GM12878 (cell line): ENCODE measurements at regions of chr11 and their contacts with region 1.

Region 1: DNA sequence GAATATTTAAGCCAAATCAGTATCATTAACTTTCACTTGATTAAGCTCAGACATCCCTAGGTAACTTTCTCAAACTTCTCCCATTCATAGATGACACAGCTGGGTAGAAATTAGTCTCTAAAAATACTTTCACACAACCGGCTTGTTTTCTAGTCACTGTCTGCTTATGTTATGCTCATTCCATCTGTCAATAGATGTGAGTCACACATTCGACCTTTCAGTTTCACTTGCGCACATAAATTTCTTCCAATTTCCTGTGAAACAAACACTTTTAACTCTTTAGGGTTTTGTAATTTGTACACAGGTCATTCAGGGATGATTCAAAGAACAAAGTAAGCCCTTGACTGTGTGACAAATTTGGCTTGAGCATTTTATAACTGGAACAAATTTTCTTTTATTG is 723.0 kb downstream of the KCNA4 start:
- DNase-seq: peak; percentile 45
- ATAC-seq: peak; percentile 96
- H3K4me3 ChIP-seq: no peak overlapping the region
- H3K27ac ChIP-seq: no peak overlapping the region
- H3K4me1 ChIP-seq: no peaks in the 10 kb centered on the region
- H3K27me3 ChIP-seq: no peaks in the 10 kb centered on the region
- CTCF ChIP-seq: no peak
- EP300 ChIP-seq: peak; percentile 98 to 99
- POLR2A ChIP-seq: no peak
- RAD21 ChIP-seq: no peak

Region 2: DNA sequence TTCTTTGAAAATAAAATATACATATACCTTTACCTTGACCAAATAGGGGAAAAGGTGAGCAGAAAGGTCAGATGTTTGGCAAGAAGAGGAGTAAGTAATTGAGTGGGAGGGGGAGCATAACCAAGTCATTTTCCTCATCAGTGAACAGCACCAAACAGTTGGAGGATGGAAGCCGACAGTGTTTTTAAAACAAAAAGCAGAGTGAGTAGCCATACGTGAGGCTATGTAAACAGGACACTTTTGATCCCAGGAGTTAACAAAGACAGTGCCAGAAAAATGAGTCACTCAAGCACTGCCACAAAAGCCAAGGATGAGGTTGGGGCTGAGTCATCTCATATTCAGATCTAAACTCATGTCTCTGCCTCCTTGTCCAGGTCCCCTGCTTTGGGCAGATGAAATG is 11.7 kb before region 1 on chr11:
- CTCF ChIA-PET with region 1: interaction called, 41 read pairs
- POLR2A ChIA-PET with region 1: interaction called, 6 read pairs
- RAD21 ChIA-PET with region 1: interaction called, 57 read pairs
- SMC1A ChIA-PET with region 1: interaction called, 71 read pairs
- in situ Hi-C with region 1: no loop called
- intact Hi-C with region 1: no loop called
- DNase-seq: no peak
- ATAC-seq: peak; percentile 59
- H3K4me3 ChIP-seq: no peak overlapping the region
- H3K27ac ChIP-seq: no peak overlapping the region
- H3K4me1 ChIP-seq: no peaks in the 10 kb centered on the region
- H3K27me3 ChIP-seq: no peaks in the 10 kb centered on the region
- CTCF ChIP-seq: no peak
- EP300 ChIP-seq: no peak
- POLR2A ChIP-seq: no peak
- RAD21 ChIP-seq: no peak

Region 3: GRCh38 chr11:29306527-29306926 is 12.7 kb after region 1 on chr11:
- CTCF ChIA-PET with region 1: interaction called, 4 read pairs
- POLR2A ChIA-PET with region 1: interaction called, 4 read pairs
- RAD21 ChIA-PET with region 1: interaction called, 4 read pairs
- SMC1A ChIA-PET with region 1: interaction called, 16 read pairs
- in situ Hi-C with region 1: no loop called
- intact Hi-C with region 1: no loop called
- DNase-seq: no peak
- ATAC-seq: no peak
- H3K4me3 ChIP-seq: no peak overlapping the region
- H3K27ac ChIP-seq: no peak overlapping the region
- H3K4me1 ChIP-seq: no peaks in the 10 kb centered on the region
- H3K27me3 ChIP-seq: no peaks in the 10 kb centered on the region
- CTCF ChIP-seq: no peak
- EP300 ChIP-seq: no peak
- POLR2A ChIP-seq: no peak
- RAD21 ChIP-seq: no peak

Region 4: DNA sequence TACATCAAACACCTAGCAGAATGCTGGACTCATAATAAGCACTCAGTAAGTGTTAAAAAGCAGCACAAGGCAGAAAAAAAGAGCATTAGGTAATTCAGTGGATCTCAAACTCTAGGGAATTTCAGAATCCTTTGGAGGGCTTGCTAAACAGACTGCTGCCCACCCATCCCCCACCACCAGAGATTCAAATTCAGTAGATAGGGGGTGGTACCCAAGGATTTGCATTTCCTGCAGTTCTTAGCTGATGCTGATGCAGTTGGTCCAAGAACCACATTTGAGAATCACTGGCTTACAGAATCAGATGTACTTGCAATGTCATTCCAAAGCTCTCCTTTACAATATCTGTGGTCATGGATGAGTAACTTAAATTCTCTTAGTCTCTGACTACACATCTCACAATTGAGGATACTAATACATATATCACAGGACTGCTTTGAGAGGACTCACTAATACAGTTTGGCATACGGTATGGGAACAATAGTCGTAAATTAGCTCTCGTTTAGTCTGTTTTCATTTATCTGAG is 58.5 kb after region 1 on chr11:
- CTCF ChIA-PET with region 1: no interaction called
- POLR2A ChIA-PET with region 1: no interaction called
- RAD21 ChIA-PET with region 1: no interaction called
- SMC1A ChIA-PET with region 1: no interaction called
- in situ Hi-C with region 1: no loop called
- intact Hi-C with region 1: no loop called
- DNase-seq: no peak
- ATAC-seq: no peak
- H3K4me3 ChIP-seq: no peak overlapping the region
- H3K27ac ChIP-seq: no peak overlapping the region
- H3K4me1 ChIP-seq: no peaks in the 10 kb centered on the region
- H3K27me3 ChIP-seq: no peaks in the 10 kb centered on the region
- CTCF ChIP-seq: no peak
- EP300 ChIP-seq: no peak
- POLR2A ChIP-seq: no peak
- RAD21 ChIP-seq: no peak